ENCODE measurements at regions of chr18 and their contacts with region 1.

Region 1: GRCh38 chr18:2994603-2995432 is 18.1 kb downstream of the LPIN2 start:
- DNase-seq: peak; percentile 93
- ATAC-seq: peak; percentile 73
- H3K4me3 Mint-ChIP-seq: peak overlapping the region; percentile 36
- H3K27ac Mint-ChIP-seq: peak overlapping the region; percentile 87
- H3K4me1 Mint-ChIP-seq: peaks cover 84% of the 10 kb centered on the region
- H3K27me3 Mint-ChIP-seq: no peaks in the 10 kb centered on the region
- CTCF ChIP-seq: peak; percentile 76

Region 2: GRCh38 chr18:2932247-2933181 is 62.3 kb before region 1 on chr18:
- CTCF ChIA-PET with region 1: interaction called, 77 read pairs
- POLR2A ChIA-PET with region 1: interaction called, 4 read pairs
- intact Hi-C with region 1: no loop called
- DNase-seq: peak; percentile 56
- ATAC-seq: peak; percentile 71
- H3K4me3 Mint-ChIP-seq: no peak overlapping the region
- H3K27ac Mint-ChIP-seq: peak overlapping the region; percentile 79
- H3K4me1 Mint-ChIP-seq: peaks cover 43% of the 10 kb centered on the region
- H3K27me3 Mint-ChIP-seq: no peaks in the 10 kb centered on the region
- CTCF ChIP-seq: peak; percentile 88

Region 3: DNA sequence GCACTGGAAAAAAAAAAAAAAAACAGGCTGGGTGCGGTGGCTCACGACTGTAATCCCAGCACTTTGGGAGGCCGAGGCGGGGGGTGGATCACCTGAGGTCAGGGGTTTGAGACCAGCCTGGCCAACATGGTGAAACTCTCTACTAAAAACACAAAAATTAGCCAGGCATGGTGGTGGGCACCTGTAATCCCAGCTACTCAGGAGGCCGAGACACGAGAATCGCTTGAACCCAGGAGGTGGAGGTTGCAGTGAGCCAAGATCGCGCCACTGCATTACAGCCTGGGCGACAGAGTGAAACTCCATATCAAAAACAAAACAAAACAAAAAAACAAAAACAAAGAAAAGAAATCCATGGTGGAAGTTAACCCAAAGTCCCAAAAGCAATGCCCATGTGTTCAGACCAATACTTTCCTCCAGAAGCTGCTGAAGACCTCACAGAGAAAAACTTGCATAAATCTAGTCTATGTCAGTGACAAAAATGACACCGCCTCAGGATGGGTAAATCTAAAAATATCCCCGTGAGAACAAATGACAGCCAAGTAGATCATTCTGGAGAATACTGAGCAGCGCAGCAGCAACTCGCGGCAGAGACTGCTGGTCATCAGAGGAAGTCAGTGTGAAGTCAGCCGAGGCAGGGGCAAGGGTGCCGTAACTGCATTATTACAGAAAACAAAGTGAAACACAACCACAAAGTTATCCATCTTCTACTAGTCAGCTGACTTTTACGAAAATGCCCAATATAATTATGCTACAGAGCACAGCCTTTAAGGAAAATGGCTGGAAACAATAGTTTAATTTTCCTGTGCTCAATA is 22.9 kb before region 1 on chr18:
- CTCF ChIA-PET with region 1: interaction called, 11 read pairs
- POLR2A ChIA-PET with region 1: interaction called, 9 read pairs
- intact Hi-C with region 1: no loop called
- DNase-seq: peak; percentile 88
- ATAC-seq: peak; percentile 78
- H3K4me3 Mint-ChIP-seq: peak overlapping the region; percentile 81
- H3K27ac Mint-ChIP-seq: peak overlapping the region; percentile 99
- H3K4me1 Mint-ChIP-seq: peaks cover 91% of the 10 kb centered on the region
- H3K27me3 Mint-ChIP-seq: no peaks in the 10 kb centered on the region
- CTCF ChIP-seq: no peak

Region 4: GRCh38 chr18:3012964-3013804 is 18.4 kb after region 1 on chr18 and contains the start of gene LPIN2:
- CTCF ChIA-PET with region 1: interaction called, 11 read pairs
- POLR2A ChIA-PET with region 1: interaction called, 11 read pairs
- intact Hi-C with region 1: no loop called
- DNase-seq: peak; percentile 98
- ATAC-seq: peak; percentile 95
- H3K4me3 Mint-ChIP-seq: peak within 1 kb of the TSS; percentile 99
- H3K27ac Mint-ChIP-seq: peak within 1 kb of the TSS; percentile 97
- H3K4me1 Mint-ChIP-seq: peaks cover 63% of the 10 kb centered on the region
- H3K27me3 Mint-ChIP-seq: no peaks in the 10 kb centered on the region
- CTCF ChIP-seq: no peak
- total RNA-seq, gene LPIN2: 95.5 to 95.7 TPM

Region 5: GRCh38 chr18:3119401-3120335 is 124.8 kb after region 1 on chr18:
- CTCF ChIA-PET with region 1: interaction called, 11 read pairs
- POLR2A ChIA-PET with region 1: no interaction called
- intact Hi-C with region 1: no loop called
- DNase-seq: no peak
- ATAC-seq: no peak
- H3K4me3 Mint-ChIP-seq: no peak overlapping the region
- H3K27ac Mint-ChIP-seq: no peak overlapping the region
- H3K4me1 Mint-ChIP-seq: no peaks in the 10 kb centered on the region
- H3K27me3 Mint-ChIP-seq: no peaks in the 10 kb centered on the region
- CTCF ChIP-seq: no peak

Measured in activated CD8-positive, alpha-beta T cell treated with anti-CD3 and anti-CD28 coated beads for 36 hours (primary cell).